ENCODE measurements at regions of chr16 and their contacts with region 1.

Region 1: GRCh38 chr16:53913099-53913870 is 209.3 kb downstream of the FTO start:
- DNase-seq: peak; percentile 89
- H3K4me3 ChIP-seq: no peak overlapping the region
- H3K27ac ChIP-seq: peak overlapping the region; percentile 41
- H3K4me1 ChIP-seq: peaks cover 33% of the 10 kb centered on the region
- H3K27me3 ChIP-seq: no peaks in the 10 kb centered on the region
- CTCF ChIP-seq: no peak

Region 2: GRCh38 chr16:53933407-53933806 is 20.1 kb after region 1 on chr16:
- CTCF ChIA-PET with region 1: interaction called, 15 read pairs
- POLR2A ChIA-PET with region 1: no interaction called
- intact Hi-C with region 1: no loop called
- DNase-seq: no peak
- H3K4me3 ChIP-seq: no peak overlapping the region
- H3K27ac ChIP-seq: no peak overlapping the region
- H3K4me1 ChIP-seq: peaks cover 2% of the 10 kb centered on the region
- H3K27me3 ChIP-seq: no peaks in the 10 kb centered on the region
- CTCF ChIP-seq: no peak